Cardiac septum (tissue), 1 donor: ENCODE measurements at regions of chr18 and their contacts with region 1.

Region 1: GRCh38 chr18:9066817-9067306 is 35.6 kb upstream of the NDUFV2 start:
- DNase-seq: no peak

Region 2: DNA sequence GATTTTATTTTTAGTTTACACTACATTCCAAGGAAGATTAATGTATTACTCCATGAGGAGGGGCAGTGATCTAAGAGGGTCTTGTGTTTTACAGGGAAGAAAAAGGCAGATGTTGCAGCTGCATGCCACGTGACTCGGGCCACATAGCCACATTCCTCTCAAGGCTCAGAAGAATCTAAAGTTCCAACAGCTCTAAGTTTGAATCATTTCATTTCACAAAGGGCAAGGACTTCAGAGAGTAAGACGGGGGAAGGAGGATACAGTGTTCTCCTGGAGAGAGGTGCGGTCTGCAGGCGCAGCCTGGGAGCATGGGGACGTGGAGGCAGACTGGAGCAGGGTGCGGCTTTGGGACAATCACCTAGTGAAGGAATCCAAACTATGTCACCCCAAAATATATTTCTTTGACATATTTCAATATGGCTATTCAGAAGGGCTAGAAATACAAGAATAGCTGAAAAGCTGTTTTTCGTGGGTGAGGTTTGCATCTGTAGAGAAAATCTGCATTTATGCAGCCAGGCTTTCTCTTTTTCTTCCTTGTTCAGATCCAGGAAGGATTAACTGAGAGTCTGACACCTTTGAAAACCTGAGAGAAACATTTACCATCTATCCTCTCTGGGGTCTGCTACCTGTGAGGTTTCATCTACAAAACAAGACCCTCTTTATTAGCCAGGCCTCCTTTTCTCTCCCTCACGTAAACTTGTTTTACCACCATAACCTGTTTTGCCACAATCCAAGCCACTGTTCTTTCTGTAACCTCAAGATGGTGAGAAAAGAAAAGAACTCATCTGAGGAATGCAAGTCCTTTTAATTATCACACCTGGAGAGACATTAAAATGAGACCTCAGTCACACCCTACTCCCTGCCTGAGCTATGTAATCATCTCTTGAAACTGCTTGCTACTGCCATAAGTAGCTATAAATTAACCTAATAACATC is 129.4 kb before region 1 on chr18:
- intact Hi-C with region 1: no loop called
- DNase-seq: no peak

Region 3: GRCh38 chr18:9147440-9148202 is 80.8 kb after region 1 on chr18:
- intact Hi-C with region 1: loop called (anchors 2 kb)
- DNase-seq: no peak

Region 4: DNA sequence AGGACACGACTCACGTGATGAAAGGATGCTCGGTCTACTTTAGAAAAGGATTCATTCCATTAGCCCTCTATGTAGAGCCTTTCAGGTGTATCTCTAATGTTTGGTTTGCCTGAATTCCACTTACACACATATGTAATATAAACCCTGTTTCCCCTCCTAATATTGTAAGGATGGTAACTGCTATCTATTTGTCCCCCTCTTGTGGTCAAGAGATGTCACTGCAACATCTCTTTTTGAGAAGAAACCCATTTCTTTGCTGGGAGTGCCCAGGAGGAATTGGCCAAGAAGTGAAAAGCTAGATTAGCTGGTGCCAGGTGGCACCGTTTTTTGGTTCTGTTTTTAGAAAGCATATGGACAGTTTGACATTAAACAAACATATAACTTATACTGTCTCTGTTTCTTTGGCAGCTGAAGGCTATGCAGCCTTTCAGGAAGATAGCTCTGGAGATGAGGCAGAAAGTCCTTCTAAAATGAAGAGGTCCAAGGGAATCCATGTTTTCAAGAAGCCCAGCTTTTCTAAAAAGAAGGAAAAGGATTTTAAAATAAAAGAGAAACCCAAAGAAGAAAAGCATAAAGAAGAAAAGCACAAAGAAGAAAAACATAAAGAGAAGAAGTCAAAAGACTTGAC is 449.7 kb after region 1 on chr18:
- intact Hi-C with region 1: loop called (anchors 5 kb)
- DNase-seq: no peak